MCF 10A (cell line): ENCODE measurements at regions of chr4 and their contacts with region 1.

Region 1: GRCh38 chr4:48127682-48128394 is 6.2 kb downstream of the TXK start:
- DNase-seq: peak; percentile 83
- H3K4me3 Mint-ChIP-seq: peak overlapping the region; percentile 70
- H3K27ac Mint-ChIP-seq: peak overlapping the region; percentile 57
- H3K4me1 Mint-ChIP-seq: peaks cover 9% of the 10 kb centered on the region
- H3K27me3 Mint-ChIP-seq: no peaks in the 10 kb centered on the region
- CTCF ChIP-seq: peak; percentile 52

Region 2: DNA sequence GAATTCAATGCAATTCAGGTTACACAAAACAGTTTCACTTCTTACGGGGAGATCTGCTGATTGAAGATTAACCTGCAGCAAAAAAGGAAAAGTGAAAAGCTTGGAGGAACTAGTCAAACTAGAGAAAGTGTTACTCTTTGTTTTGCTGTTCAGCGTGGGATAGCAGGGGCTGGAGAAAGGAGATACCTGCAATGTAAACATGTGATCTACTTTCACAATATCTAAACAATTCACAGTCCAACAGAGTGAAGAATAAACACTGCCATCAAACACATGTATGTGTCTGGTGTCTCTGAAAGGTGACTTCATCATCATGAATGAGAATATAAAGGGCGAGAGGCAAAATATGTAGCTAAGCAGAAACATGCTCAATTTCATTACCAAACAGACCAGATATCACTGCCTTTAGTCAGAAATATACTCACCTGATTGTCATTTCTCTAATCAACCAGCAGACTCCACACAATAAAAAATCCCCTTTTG is 84.8 kb before region 1 on chr4:
- CTCF ChIA-PET with region 1: no interaction called
- POLR2A ChIA-PET with region 1: no interaction called
- intact Hi-C with region 1: no loop called
- DNase-seq: no peak
- H3K4me3 Mint-ChIP-seq: no peak overlapping the region
- H3K27ac Mint-ChIP-seq: no peak overlapping the region
- H3K4me1 Mint-ChIP-seq: no peaks in the 10 kb centered on the region
- H3K27me3 Mint-ChIP-seq: no peaks in the 10 kb centered on the region
- CTCF ChIP-seq: no peak

Region 3: DNA sequence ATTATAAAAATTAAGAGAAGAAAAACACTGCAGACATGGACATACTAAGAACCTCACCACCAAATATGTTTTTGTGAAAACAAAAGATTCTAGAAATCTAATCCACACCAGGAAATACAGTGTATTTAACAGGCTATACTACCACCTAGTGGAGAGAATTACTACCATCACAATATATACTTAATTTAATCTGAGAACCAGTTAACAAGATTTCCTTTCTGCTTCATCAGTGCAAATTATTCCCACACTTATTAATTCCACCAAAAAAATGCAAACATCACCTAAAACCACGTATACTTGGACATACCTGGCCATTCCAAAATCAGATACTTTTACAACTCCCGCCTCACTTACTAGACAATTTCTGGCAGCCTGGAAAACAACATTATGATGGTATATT is 13.2 kb after region 1 on chr4:
- CTCF ChIA-PET with region 1: interaction called, 35 read pairs
- POLR2A ChIA-PET with region 1: interaction called, 3 read pairs
- intact Hi-C with region 1: no loop called
- DNase-seq: peak; percentile 48
- H3K4me3 Mint-ChIP-seq: no peak overlapping the region
- H3K27ac Mint-ChIP-seq: no peak overlapping the region
- H3K4me1 Mint-ChIP-seq: peaks cover 6% of the 10 kb centered on the region
- H3K27me3 Mint-ChIP-seq: no peaks in the 10 kb centered on the region
- CTCF ChIP-seq: peak; percentile 43

Region 4: GRCh38 chr4:48275247-48275646 is 147.4 kb after region 1 on chr4:
- CTCF ChIA-PET with region 1: interaction called, 4 read pairs
- POLR2A ChIA-PET with region 1: interaction called, 3 read pairs
- intact Hi-C with region 1: loop called (anchors 1 kb)
- DNase-seq: peak; percentile 57
- H3K4me3 Mint-ChIP-seq: no peak overlapping the region
- H3K27ac Mint-ChIP-seq: no peak overlapping the region
- H3K4me1 Mint-ChIP-seq: no peaks in the 10 kb centered on the region
- H3K27me3 Mint-ChIP-seq: no peaks in the 10 kb centered on the region
- CTCF ChIP-seq: peak; percentile 63

Region 5: GRCh38 chr4:48290146-48290772 is 162.4 kb after region 1 on chr4:
- CTCF ChIA-PET with region 1: interaction called, 3 read pairs
- POLR2A ChIA-PET with region 1: interaction called, 3 read pairs
- intact Hi-C with region 1: loop called (anchors 5 kb)
- DNase-seq: peak; percentile 55
- H3K4me3 Mint-ChIP-seq: no peak overlapping the region
- H3K27ac Mint-ChIP-seq: no peak overlapping the region
- H3K4me1 Mint-ChIP-seq: no peaks in the 10 kb centered on the region
- H3K27me3 Mint-ChIP-seq: no peaks in the 10 kb centered on the region
- CTCF ChIP-seq: peak; percentile 67

Region 6: DNA sequence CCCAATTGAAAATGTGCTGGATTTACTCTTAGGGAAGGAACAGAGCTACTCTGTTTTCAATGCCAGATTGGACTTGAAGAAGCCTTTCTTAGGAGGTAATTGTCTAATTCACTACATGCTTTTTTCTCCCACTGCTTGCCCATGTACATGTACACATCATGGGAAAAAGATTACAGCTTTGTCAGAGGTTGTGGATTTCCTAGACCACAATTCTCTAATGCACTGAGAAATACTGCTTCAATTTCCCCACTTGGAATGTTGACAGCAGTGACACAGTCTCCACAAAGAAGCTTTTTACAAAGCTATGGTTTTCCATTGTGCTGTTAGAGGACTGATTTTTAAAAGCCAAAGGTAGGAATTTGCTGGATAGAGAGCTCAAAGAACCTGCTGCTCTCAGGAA is 381.7 kb after region 1 on chr4:
- CTCF ChIA-PET with region 1: no interaction called
- POLR2A ChIA-PET with region 1: no interaction called
- intact Hi-C with region 1: no loop called
- DNase-seq: no peak
- H3K4me3 Mint-ChIP-seq: no peak overlapping the region
- H3K27ac Mint-ChIP-seq: no peak overlapping the region
- H3K4me1 Mint-ChIP-seq: no peaks in the 10 kb centered on the region
- H3K27me3 Mint-ChIP-seq: no peaks in the 10 kb centered on the region
- CTCF ChIP-seq: no peak